Ovary (tissue), 10 donors: ENCODE measurements at regions of chr7 and their contacts with region 1.

Region 1: DNA sequence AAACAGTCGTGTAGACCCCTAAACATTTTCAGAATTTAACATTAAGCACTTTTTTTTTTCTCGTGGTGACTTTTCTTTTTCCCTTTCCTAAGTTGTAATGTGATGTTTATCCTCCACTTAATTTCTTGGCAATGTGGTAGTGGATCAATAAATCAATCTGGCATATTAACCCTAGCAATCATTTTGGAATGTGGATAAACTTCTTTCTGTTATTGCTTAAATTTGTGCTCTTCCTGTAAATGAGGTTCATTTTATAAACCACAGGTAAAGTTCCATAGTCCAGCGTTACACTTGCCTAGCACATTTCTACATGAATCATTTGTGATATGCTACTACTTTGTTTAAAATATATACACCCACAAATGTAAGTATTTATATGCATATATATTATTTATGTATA is 247.4 kb upstream of the ETV1 start:
- DNase-seq: no peak
- H3K4me3 ChIP-seq: no peak overlapping the region
- H3K27ac ChIP-seq: no peak overlapping the region
- H3K4me1 ChIP-seq: no peaks in the 10 kb centered on the region
- H3K27me3 ChIP-seq: no peaks in the 10 kb centered on the region
- CTCF ChIP-seq: no peak
- EP300 ChIP-seq: no peak
- POLR2A ChIP-seq: no peak

Region 2: DNA sequence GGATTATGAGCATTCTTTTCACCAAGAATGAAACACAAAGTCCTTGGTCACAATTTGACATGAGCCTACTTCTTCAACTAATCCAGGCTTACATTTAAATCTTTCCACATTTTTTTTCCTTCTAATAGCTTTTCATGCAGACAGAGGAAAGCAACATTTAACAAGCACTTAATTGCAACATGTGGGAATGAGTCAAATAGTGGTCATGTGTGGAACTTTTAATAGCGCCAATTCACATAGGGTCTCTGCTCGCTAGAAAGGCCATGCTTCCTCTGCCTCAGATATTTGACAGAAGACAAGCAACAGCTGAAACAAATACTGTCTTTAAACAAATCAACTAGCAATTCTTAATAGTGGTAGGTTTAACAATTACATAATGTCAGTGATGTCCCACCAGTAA is 38.5 kb after region 1 on chr7:
- intact Hi-C with region 1: loop called in 1 of 4 experiments (anchors 2 kb)
- DNase-seq: no peak
- H3K4me3 ChIP-seq: no peak overlapping the region
- H3K27ac ChIP-seq: no peak overlapping the region
- H3K4me1 ChIP-seq: no peaks in the 10 kb centered on the region
- H3K27me3 ChIP-seq: no peaks in the 10 kb centered on the region
- CTCF ChIP-seq: no peak
- EP300 ChIP-seq: no peak
- POLR2A ChIP-seq: no peak

Region 3: GRCh38 chr7:14414274-14414986 is 177.6 kb after region 1 on chr7:
- intact Hi-C with region 1: no loop called
- DNase-seq: no peak
- H3K4me3 ChIP-seq: no peak overlapping the region
- H3K27ac ChIP-seq: no peak overlapping the region
- H3K4me1 ChIP-seq: no peaks in the 10 kb centered on the region
- H3K27me3 ChIP-seq: no peaks in the 10 kb centered on the region
- CTCF ChIP-seq: no peak
- EP300 ChIP-seq: no peak
- POLR2A ChIP-seq: no peak

Region 4: GRCh38 chr7:14424675-14425074 is 187.8 kb after region 1 on chr7:
- intact Hi-C with region 1: no loop called
- DNase-seq: no peak
- H3K4me3 ChIP-seq: no peak overlapping the region
- H3K27ac ChIP-seq: no peak overlapping the region
- H3K4me1 ChIP-seq: no peaks in the 10 kb centered on the region
- H3K27me3 ChIP-seq: peaks cover 3% of the 10 kb centered on the region
- CTCF ChIP-seq: no peak
- EP300 ChIP-seq: no peak
- POLR2A ChIP-seq: no peak